Activated T-helper 1 cell treated with anti-CD3 and anti-CD28 coated beads, Interleukin-12 subunit alpha, Interleukin-12 subunit beta, Interleukin-2, Interleukin-4 antibody, amounts not matched to agents 30 ng/mL and 10 ng/mL and 1 ng/mL, durations not matched to agents 14 hours and 24 hours and 36 hours (primary cell): ENCODE measurements at regions of chr15 and their contacts with region 1.

Region 1: DNA sequence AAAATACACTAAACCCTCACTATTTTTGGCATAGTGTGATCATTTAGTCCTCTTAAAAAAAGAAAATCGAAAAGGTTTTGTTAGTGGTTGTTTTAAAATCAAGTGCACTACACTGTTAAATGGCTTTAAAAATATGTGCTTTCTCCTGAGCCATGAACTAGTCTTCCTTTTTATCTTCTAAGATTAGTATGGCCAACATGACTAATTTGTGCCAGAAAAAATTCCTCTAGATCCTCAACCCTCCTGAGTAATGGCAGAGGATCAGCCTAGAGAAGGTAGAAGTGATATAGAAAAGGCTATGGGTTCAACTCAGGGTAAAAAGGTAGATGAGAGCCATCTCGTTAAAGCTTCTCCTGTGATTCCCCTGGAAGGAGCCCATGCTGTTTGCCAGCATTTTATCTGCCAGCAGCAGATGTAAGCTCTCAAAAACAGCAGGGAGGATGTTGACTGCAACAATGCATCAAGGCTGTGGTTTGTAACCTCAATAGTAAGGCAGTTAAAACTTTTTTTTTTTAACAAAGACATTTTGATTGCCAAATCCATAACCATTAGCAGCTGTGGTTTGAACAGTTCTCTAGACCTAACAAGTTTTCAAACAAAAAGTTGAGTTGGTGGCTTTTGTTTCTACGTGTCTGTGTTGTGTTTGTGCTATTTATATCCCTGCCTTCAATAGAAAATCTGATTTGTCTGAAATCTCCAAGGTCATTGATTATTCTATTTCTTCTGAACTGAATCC is 30.2 kb upstream of the ZNF609 start:
- DNase-seq: peak; percentile 50
- H3K4me3 Mint-ChIP-seq: peak overlapping the region; percentile 72
- H3K27ac Mint-ChIP-seq: peak overlapping the region; percentile 89
- H3K4me1 Mint-ChIP-seq: peaks cover 31% of the 10 kb centered on the region
- H3K27me3 Mint-ChIP-seq: no peaks in the 10 kb centered on the region

Region 2: GRCh38 chr15:64387562-64388168 is 42.5 kb before region 1 on chr15 and contains the start of gene TRIP4:
- intact Hi-C with region 1: no loop called
- DNase-seq: peak; percentile 96
- H3K4me3 Mint-ChIP-seq: peak within 1 kb of the TSS; percentile 99
- H3K27ac Mint-ChIP-seq: peak within 1 kb of the TSS; percentile 89
- H3K4me1 Mint-ChIP-seq: peaks cover 17% of the 10 kb centered on the region
- H3K27me3 Mint-ChIP-seq: no peaks in the 10 kb centered on the region
- total RNA-seq, gene TRIP4: 17.5 and 21.7 TPM in 2 replicates

Region 3: DNA sequence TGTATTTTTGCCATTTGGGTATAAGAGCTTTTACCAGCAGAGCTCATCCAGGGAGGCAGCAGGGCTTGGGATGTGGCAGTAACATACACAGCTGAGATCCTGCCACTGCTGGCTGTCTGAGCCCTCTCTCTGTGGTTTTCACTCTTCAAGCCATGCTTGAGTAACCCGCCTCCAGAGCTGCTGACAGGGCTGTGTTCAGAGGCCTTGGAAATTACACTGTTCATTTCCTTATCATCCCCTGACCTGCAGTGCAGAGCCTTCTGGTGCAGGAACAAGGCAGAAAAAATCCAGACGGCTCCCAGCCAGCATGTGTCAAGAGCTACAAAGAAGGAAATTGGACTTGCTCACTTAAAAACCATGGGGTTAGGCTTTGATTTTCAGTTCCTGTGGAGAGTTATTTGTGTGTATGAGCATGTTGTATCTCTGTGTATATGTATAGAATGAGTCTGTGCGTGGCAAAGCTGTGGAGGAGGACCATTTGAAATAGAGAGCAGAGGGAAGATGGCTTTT is 77.2 kb after region 1 on chr15:
- intact Hi-C with region 1: loop called (anchors 5 kb)
- DNase-seq: peak; percentile 16
- H3K4me3 Mint-ChIP-seq: no peak overlapping the region
- H3K27ac Mint-ChIP-seq: peak overlapping the region; percentile 36
- H3K4me1 Mint-ChIP-seq: peaks cover 48% of the 10 kb centered on the region
- H3K27me3 Mint-ChIP-seq: no peaks in the 10 kb centered on the region

Region 4: DNA sequence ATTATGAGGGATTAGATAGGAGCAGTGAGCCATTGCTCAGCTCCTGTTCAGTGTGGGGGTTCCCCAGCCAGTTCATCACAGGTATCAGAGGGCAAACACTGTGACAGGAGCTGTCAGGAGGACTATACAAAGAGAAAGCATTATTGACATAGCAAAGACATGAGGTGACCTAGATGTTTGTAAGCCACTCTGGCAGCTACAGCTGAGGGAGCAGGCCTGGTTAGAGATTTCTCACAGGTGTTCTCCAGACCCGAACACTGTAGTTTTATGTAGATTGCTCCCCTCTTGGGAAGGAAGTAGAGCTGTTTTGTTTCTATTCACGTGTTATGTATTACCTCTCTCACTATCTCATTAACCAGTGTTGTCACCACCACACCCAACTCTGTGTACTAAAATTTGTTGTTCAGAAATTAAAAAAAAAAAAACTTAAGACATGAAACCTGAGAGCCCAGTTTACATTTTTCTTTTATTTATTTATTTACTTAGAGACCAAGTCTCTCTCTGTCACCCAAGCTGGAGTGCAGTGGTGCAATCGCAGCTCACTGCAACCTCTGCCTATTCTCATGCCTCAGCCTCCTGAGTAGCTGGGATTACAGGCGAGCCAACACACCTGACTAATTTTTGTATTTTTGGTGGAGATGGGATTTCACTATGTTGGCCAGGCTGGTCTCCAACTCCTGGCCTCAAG is 221.5 kb after region 1 on chr15:
- intact Hi-C with region 1: loop called (anchors 1 kb)
- DNase-seq: peak; percentile 20
- H3K4me3 Mint-ChIP-seq: peak overlapping the region; percentile 7
- H3K27ac Mint-ChIP-seq: peak overlapping the region; percentile 40
- H3K4me1 Mint-ChIP-seq: peaks cover 26% of the 10 kb centered on the region
- H3K27me3 Mint-ChIP-seq: no peaks in the 10 kb centered on the region

Region 5: DNA sequence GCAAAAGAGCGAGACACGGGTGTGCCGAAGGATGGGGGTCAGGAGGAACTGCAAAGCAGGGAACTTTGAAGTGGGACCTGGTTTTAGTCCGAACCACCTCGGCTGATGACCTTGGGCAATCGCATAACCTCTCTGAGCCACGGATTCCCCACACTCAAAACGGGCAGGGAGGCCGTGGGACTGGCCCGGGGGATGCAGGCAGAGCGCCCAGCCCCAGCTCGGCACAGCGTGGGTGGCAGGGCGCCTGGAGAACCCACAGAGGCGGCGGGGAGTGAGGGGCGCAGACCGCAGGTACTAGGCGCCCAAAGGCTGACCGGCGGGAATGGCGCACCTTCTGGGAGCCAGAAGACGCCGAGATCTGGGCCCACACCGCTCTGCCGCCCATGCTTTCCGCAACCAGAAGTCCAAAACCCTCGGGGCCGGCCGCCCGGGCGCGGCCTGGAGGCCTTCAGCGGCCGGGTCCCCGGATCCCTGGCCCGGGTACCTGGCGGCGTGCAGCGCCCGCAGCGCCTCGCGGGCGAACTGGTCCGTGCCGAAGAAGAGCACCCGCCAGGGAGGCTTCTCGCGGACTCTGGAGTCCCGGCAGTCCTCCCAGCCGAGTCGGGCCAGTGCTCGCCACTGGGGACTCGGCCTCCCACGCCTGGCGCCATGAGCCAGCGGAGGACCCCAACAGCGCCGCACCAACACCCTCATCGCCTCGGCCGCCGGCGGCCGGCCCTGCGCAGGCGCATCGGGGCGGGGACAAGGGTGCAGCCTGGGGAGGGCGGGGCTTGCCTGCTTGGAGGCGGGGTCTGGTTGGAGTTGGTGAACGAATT is 599.0 kb after region 1 on chr15 and contains the start of gene MTFMT:
- intact Hi-C with region 1: no loop called
- DNase-seq: peak; percentile 83
- H3K4me3 Mint-ChIP-seq: peak within 1 kb of the TSS; percentile 89
- H3K27ac Mint-ChIP-seq: peak within 1 kb of the TSS; percentile 78
- H3K4me1 Mint-ChIP-seq: peaks cover 23% of the 10 kb centered on the region
- H3K27me3 Mint-ChIP-seq: peaks cover 16% of the 10 kb centered on the region
- total RNA-seq, gene MTFMT: 18.8 and 21.1 TPM in 2 replicates